ENCODE measurements at regions of chr6 and their contacts with region 1.

Region 1: GRCh38 chr6:3742426-3743344 is 8.8 kb downstream of the PXDC1 start:
- DNase-seq: peak; percentile 82
- H3K4me3 ChIP-seq: no peak overlapping the region
- H3K27ac ChIP-seq: no peak overlapping the region
- H3K4me1 ChIP-seq: peaks cover 8% of the 10 kb centered on the region
- CTCF ChIP-seq: peak; percentile 98

Region 2: GRCh38 chr6:3825851-3826581 is 83.3 kb after region 1 on chr6:
- CTCF ChIA-PET with region 1: no interaction called
- POLR2A ChIA-PET with region 1: no interaction called
- intact Hi-C with region 1: no loop called
- DNase-seq: no peak
- H3K4me3 ChIP-seq: no peak overlapping the region
- H3K27ac ChIP-seq: no peak overlapping the region
- H3K4me1 ChIP-seq: no peaks in the 10 kb centered on the region
- CTCF ChIP-seq: no peak

Region 3: GRCh38 chr6:3929281-3929798 is 186.7 kb after region 1 on chr6:
- CTCF ChIA-PET with region 1: no interaction called
- POLR2A ChIA-PET with region 1: no interaction called
- intact Hi-C with region 1: loop called (anchors 1 kb)
- DNase-seq: no peak
- H3K4me3 ChIP-seq: no peak overlapping the region
- H3K27ac ChIP-seq: no peak overlapping the region
- H3K4me1 ChIP-seq: no peaks in the 10 kb centered on the region
- CTCF ChIP-seq: no peak

Region 4: GRCh38 chr6:3977875-3978711 is 235.4 kb after region 1 on chr6:
- CTCF ChIA-PET with region 1: no interaction called
- POLR2A ChIA-PET with region 1: interaction called, 3 read pairs
- intact Hi-C with region 1: loop called (anchors 5 kb)
- DNase-seq: peak; percentile 54
- H3K4me3 ChIP-seq: no peak overlapping the region
- H3K27ac ChIP-seq: no peak overlapping the region
- H3K4me1 ChIP-seq: no peaks in the 10 kb centered on the region
- CTCF ChIP-seq: peak; percentile 84

Region 5: DNA sequence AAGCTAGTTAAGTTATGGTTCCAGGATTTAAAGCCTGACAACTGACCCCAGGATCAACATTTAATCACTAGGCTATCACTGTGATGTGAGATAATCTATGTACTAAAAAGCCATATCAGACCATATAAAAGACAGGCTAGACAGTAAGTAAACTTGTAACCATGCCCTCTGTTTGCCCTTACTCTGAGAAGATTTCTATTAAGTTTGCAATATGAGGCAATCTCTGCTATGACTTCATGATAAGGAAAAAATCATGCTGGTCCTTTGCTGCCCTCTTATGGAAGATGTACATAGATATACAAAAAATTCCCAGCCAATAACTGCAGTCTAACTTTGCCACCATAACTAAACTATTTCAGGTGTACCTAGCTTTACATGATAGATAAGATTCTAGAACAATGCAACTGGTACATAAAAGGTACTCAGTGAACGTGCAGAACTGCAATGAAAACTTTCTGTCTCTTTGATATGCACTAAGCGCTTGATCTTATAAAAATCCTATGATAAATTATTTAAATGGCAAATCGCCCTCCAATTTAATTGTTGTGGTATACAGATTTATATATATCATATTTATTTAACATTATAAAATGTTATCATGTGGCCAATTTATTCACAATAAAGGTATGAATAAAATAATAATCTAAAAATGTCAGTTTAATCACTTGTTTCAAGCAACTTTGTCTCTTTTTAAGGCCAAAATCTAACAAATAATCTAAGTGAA is 265.8 kb after region 1 on chr6:
- CTCF ChIA-PET with region 1: no interaction called
- POLR2A ChIA-PET with region 1: no interaction called
- intact Hi-C with region 1: loop called (anchors 1 kb)
- DNase-seq: peak; percentile 66
- H3K4me3 ChIP-seq: no peak overlapping the region
- H3K27ac ChIP-seq: no peak overlapping the region
- H3K4me1 ChIP-seq: peaks cover 14% of the 10 kb centered on the region
- CTCF ChIP-seq: peak; percentile 79

Region 6: DNA sequence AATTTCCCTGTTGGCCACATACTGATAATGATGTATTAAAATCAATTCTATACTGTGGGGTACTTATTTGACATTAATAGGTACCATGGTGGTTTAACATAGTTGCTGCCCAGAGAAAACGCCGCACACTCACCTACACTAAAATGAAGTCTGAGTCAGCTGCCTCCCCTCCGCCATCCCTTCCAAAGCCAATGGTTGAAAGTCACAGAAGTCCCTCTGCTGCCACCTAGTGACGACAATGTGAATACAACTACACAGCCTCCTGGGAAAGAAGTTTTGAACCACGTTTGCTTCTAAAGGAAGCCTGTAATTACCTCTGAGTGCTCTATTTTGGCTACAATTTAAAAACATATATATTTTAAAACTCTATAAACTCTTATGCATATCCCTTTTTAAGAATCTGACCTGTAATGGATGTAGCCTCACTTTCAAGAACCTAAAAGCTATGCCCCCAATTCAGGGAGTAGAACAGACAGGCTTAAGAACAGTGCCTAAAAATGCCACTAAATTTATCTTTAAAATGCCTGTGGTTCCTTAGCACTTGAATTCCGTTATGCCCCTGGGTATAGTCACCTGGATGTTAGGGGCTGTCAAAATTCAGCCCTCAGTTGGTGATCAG is 413.3 kb after region 1 on chr6:
- CTCF ChIA-PET with region 1: no interaction called
- POLR2A ChIA-PET with region 1: no interaction called
- intact Hi-C with region 1: loop called (anchors 1 kb)
- DNase-seq: peak; percentile 80
- H3K4me3 ChIP-seq: no peak overlapping the region
- H3K27ac ChIP-seq: no peak overlapping the region
- H3K4me1 ChIP-seq: peaks cover 31% of the 10 kb centered on the region
- CTCF ChIP-seq: peak; percentile 95

Region 7: DNA sequence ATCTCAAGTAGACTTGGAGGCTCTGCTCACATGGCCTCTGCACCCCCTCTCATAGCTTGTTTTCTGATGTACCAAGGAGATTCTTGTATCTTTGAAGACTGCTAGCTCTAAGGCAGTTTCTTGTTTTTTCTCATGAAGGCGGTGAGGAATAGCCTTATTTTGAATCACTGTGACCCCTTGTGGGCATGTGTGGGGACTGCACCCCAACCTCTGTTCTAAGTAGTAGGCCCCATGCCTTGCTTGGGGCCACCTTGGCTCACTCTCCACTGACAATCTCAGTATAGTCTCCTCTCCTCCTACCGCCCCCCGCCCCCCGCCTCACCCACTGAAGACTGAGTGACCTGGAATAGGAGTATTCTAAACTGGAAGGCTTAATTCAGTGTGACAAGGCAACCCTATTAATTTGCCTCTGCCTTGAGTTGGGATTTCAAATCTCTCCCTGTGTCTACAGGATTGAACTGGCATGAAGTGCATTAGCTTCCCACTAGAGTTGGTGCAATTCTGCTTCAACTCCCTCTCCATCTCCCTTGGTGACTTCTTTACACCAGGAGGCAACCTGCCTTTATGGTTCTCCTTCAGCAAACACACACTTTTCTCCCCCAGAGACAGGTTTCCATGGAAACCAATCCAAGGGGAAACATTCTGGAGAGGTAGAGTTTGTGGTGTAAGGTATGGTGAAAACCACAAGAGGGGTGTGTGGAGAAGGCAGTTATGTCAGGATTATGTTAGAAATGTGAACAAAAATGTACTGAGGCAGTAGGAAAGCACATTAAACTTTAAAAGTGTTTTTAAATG is 468.1 kb after region 1 on chr6:
- CTCF ChIA-PET with region 1: no interaction called
- POLR2A ChIA-PET with region 1: interaction called, 3 read pairs
- intact Hi-C with region 1: loop called (anchors 1 kb)
- DNase-seq: peak; percentile 64
- H3K4me3 ChIP-seq: no peak overlapping the region
- H3K27ac ChIP-seq: no peak overlapping the region
- H3K4me1 ChIP-seq: peaks cover 8% of the 10 kb centered on the region
- CTCF ChIP-seq: peak; percentile 81

Measured in OCI-LY7 (cell line).